A673 (cell line): ENCODE measurements at regions of chr14 and their contacts with region 1.

Region 1: DNA sequence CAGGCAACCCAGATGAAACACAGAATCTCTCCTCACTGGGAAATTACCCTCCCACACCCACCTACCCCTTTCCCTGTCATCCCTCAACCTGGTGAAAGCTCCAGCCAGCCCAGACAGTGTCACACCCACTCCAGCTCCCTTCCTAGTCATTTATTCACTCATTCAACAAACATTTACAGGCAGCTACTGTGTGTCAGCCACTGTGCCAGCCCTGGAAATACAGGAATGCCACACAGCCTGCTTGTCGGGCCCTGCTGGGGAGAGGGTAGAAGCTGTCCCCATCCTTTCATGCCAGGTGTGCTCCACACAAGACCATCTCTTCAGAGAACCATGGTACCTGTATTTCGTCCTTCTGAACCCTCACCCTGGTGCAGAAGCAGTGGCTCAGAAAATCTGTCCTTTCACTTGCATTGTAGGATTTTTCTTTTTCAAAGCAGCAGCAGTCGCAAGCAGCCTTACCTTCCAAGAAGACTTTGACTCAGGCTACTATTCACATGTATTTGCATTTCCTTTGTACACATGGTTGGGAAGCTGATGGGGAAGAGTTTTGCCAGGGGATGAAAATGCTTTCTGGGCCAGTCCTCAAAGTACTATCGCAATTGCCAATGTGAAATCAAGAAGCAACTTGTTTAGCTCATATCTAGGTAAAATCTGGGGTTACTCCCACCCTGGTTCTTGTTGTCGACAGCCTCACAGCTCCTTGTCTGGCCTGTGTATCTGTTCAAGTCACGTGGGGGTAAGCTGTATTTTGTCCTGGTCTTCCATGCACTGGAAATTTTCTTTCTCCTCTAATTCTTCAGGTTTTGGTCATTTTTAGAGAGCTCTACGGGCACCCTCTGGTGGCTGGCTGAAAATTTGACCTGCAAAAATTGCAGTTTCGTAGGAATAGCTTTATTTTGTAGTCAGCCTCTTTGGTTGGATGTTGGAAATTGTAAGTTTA is 147.4 kb upstream of the EGLN3 start:
- DNase-seq: peak; percentile 40
- H3K4me3 ChIP-seq: no peak overlapping the region
- H3K27ac ChIP-seq: no peak overlapping the region
- H3K4me1 ChIP-seq: no peaks in the 10 kb centered on the region
- H3K27me3 ChIP-seq: no peaks in the 10 kb centered on the region
- CTCF ChIP-seq: peak; percentile 70

Region 2: DNA sequence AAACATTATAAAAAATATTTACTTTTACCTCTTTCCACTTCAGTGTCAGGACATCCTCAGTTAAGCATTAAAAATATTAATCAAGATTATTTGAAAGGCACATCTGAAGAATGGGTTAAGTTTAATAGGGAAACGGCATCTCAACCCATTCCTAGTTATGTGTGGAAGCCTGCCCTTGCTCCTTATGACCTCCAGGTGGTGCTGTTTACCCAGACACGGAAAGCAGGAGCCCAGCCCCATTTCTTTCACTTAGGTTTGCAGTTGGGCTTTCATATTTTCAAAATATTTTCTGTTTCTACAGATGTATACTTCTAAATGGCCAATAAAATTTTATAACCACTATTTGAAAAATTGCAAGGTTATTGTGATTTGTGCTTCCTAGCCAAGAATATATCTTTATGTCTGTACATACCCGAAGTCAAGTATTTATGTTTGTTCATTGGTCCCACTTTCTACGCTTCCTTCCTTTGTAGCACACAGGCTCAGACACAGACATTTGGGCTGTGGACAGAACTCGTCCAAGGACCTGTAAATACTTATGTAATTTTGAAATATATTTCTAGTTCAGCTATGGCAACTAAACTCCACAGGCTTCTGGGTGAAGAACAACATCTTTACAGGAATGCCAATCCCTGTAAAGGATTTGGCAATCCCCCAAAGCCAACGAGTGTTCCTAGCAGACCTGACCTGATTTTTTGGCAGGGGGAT is 1522.1 kb before region 1 on chr14:
- CTCF ChIA-PET with region 1: no interaction called
- POLR2A ChIA-PET with region 1: no interaction called
- intact Hi-C with region 1: loop called (anchors 1 kb)
- DNase-seq: peak; percentile 75
- H3K4me3 ChIP-seq: no peak overlapping the region
- H3K27ac ChIP-seq: no peak overlapping the region
- H3K4me1 ChIP-seq: peaks cover 21% of the 10 kb centered on the region
- H3K27me3 ChIP-seq: no peaks in the 10 kb centered on the region
- CTCF ChIP-seq: peak; percentile 96

Region 3: DNA sequence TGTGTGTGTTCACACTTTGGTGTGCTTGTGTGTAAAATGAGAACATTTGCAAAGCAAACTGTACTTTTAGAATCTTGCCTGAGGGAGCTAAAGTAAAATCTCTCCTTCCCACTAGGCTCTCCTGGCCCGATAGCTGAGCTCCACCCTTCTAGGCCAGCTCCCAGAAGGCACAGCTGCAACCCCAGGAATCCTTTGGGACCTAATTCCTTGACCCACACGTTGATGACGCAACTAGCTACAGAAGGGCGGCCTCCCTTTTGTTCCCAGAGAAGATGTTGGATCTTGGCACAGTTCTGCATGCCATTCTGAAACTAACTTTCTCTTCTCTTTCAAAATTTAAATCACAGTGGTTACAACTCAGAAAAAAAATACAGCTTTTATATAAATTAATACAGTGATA is 415.6 kb before region 1 on chr14:
- CTCF ChIA-PET with region 1: no interaction called
- POLR2A ChIA-PET with region 1: no interaction called
- intact Hi-C with region 1: no loop called
- DNase-seq: no peak
- H3K4me3 ChIP-seq: no peak overlapping the region
- H3K27ac ChIP-seq: no peak overlapping the region
- H3K4me1 ChIP-seq: peaks cover 24% of the 10 kb centered on the region
- H3K27me3 ChIP-seq: no peaks in the 10 kb centered on the region
- CTCF ChIP-seq: no peak

Region 4: GRCh38 chr14:33839193-33840076 is 258.9 kb before region 1 on chr14:
- CTCF ChIA-PET with region 1: interaction called, 7 read pairs
- POLR2A ChIA-PET with region 1: no interaction called
- intact Hi-C with region 1: loop called (anchors 1 kb)
- DNase-seq: peak; percentile 73
- H3K4me3 ChIP-seq: no peak overlapping the region
- H3K27ac ChIP-seq: no peak overlapping the region
- H3K4me1 ChIP-seq: no peaks in the 10 kb centered on the region
- H3K27me3 ChIP-seq: no peaks in the 10 kb centered on the region
- CTCF ChIP-seq: peak; percentile 89

Region 5: DNA sequence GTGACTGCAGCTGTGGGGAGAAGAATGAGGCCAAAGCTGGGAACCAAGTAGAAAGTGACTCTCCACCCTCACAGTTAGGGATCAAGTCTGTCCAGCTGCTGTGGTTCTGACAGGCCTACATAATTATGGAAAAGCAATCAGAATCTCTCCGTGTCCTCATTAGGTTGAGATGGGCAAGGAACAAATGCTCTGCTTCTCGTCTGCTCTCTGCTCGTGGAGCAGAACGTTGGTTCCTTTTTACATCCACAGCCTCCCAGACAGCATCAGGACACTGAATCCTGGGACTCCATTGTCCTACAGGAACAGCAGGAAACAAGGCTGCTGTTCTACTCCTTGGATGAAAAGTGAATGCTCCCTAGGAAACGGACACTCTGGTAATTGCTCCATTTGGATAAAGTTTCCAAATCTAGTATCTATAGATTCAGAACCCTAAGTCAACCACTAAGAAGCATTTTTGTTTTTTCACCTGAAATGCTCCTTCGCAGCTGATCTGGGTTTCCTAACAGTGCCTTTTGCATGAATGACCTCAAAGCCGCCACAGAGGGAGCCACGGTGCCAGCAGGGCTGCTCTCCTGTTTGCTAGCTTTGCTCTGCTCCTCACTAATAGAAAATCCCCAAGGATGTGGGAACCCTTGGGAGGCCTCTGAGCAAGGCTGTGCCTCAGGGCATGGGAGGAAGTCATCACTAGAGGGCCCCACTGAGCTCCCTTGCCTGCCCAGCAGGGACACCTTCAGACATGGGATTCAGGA is 249.4 kb before region 1 on chr14:
- CTCF ChIA-PET with region 1: interaction called, 19 read pairs
- POLR2A ChIA-PET with region 1: no interaction called
- intact Hi-C with region 1: loop called (anchors 2 kb)
- DNase-seq: peak; percentile 80
- H3K4me3 ChIP-seq: no peak overlapping the region
- H3K27ac ChIP-seq: no peak overlapping the region
- H3K4me1 ChIP-seq: no peaks in the 10 kb centered on the region
- H3K27me3 ChIP-seq: no peaks in the 10 kb centered on the region
- CTCF ChIP-seq: peak; percentile 88

Region 6: GRCh38 chr14:33897878-33898535 is 200.3 kb before region 1 on chr14:
- CTCF ChIA-PET with region 1: no interaction called
- POLR2A ChIA-PET with region 1: interaction called, 15 read pairs
- intact Hi-C with region 1: no loop called
- DNase-seq: no peak
- H3K4me3 ChIP-seq: no peak overlapping the region
- H3K27ac ChIP-seq: no peak overlapping the region
- H3K4me1 ChIP-seq: no peaks in the 10 kb centered on the region
- H3K27me3 ChIP-seq: peaks cover 2% of the 10 kb centered on the region
- CTCF ChIP-seq: no peak

Region 7: GRCh38 chr14:33959692-33960151 is 138.6 kb before region 1 on chr14:
- CTCF ChIA-PET with region 1: no interaction called
- POLR2A ChIA-PET with region 1: no interaction called
- intact Hi-C with region 1: no loop called
- DNase-seq: no peak
- H3K4me3 ChIP-seq: no peak overlapping the region
- H3K27ac ChIP-seq: no peak overlapping the region
- H3K4me1 ChIP-seq: no peaks in the 10 kb centered on the region
- H3K27me3 ChIP-seq: no peaks in the 10 kb centered on the region
- CTCF ChIP-seq: no peak

Region 8: DNA sequence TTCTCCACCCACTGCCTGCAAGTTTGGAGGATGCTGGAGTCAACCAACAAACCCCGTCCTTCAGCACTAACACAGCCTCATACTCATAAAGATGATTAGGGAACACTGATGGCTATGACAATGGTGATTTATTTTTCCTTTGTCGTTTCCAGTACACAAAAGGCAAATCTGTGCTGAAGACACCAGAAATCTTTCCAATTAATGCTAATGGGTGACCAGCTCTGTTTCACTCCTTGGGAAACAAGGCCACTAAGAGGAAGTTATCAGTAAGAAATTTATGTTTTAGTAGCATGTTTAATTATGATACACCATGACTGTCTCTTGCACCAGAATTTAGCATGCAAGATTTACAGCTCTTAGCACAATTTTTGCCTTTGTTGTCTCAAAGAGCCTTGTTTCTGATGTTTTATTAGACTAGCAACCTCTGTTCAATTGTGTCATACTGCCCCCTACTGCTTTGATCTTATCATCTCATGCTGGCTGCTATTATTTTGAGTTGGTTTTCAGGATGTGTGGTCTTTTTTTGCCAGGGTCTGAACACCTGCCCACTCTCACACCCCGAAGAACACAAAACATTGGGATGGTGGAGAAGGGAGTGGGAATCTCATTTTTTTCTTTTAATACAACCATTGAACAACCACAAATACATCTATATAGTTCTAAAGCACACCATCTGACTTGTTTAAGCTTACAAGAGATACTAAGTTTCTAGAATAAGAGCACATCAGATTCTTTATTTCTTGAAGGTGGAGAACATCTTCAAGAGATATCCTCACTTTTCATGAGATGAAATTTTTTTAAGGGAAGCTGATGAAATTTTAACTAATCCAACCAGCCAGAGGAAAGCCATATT is 202.8 kb after region 1 on chr14:
- CTCF ChIA-PET with region 1: no interaction called
- POLR2A ChIA-PET with region 1: no interaction called
- intact Hi-C with region 1: loop called (anchors 1 kb)
- DNase-seq: peak; percentile 67
- H3K4me3 ChIP-seq: no peak overlapping the region
- H3K27ac ChIP-seq: no peak overlapping the region
- H3K4me1 ChIP-seq: no peaks in the 10 kb centered on the region
- H3K27me3 ChIP-seq: no peaks in the 10 kb centered on the region
- CTCF ChIP-seq: peak; percentile 74